ENCODE measurements at regions of chr1 and their contacts with region 1.

Region 1: GRCh38 chr1:12761781-12762180 is 11.8 kb upstream of the PRAMEF12 start:
- DNase-seq: peak in 1 of 2 donors; percentile 72
- H3K4me3 ChIP-seq: no peak overlapping the region
- H3K27ac ChIP-seq: no peak overlapping the region
- H3K4me1 ChIP-seq: no peaks in the 10 kb centered on the region
- H3K27me3 ChIP-seq: no peaks in the 10 kb centered on the region
- CTCF ChIP-seq: no peak
- POLR2A ChIP-seq: no peak

Region 2: DNA sequence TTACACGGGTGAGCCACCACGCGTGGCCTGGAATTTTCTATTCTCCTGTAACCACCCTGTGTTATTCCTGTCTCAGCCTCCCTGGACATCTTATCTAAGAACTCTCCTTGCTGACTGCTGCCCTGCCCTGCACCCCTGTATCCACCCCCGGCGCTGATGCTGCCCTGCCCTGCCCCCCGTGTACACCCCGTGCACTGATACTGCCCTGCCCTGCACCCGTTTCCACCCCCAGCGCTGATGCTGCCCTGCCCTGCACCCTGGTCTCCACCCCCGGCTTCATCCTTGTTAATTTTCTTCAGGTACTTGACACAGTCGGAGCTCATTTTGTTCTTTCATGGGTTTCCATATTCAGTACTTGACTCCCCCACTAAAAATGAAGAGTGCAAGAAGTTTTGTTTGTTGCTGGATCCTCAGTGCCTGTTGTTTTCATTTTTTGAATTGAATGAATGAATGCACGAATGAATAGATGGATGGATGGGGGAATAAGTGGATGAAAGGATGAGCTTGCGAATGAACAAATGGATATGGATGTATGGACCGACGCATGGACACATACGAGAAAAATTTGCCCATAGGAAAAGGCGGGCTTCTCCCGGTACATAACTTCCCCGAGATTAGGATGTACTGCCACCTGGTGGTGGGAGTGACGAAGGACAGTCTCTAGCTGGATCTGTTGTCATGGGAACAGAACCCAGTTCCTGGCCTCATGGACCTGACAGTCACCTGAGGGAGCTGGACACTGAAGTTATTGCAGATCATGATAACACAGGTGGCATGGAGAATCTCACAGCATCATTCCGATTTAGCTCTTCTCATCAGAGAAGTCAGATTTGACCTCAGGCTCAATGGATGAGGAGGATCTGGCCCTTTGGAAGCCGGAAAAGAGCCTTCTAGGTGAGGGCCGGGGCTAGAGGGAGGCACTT is 103.0 kb before region 1 on chr1:
- intact Hi-C with region 1: no loop called
- DNase-seq: no peak
- H3K4me3 ChIP-seq: no peak overlapping the region
- H3K27ac ChIP-seq: no peak overlapping the region
- H3K4me1 ChIP-seq: no peaks in the 10 kb centered on the region
- H3K27me3 ChIP-seq: no peaks in the 10 kb centered on the region
- CTCF ChIP-seq: peak; percentile 88 to 96 (median 91)
- POLR2A ChIP-seq: no peak

Region 3: DNA sequence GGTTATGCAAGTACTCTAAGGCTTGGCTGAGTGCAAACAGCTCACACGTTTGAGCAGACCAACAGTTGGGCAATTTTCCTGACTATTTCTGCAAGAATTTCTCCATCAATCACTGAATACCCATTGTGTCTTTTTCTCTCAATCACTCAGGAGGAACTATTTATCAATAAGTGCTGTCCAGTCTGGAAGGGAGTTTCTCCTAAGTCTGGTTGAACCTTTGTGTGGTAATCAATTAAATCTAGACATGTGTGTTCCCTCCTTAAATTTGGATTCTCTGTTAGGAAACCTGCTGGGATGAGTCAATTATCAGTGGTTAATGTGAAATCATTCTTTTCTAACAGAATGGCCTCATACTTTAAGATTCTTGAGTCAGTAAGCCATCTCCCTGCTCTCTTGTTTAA is 52.7 kb before region 1 on chr1:
- intact Hi-C with region 1: no loop called
- DNase-seq: no peak
- H3K4me3 ChIP-seq: no peak overlapping the region
- H3K27ac ChIP-seq: no peak overlapping the region
- H3K4me1 ChIP-seq: no peaks in the 10 kb centered on the region
- H3K27me3 ChIP-seq: no peaks in the 10 kb centered on the region
- CTCF ChIP-seq: no peak
- POLR2A ChIP-seq: no peak

Region 4: DNA sequence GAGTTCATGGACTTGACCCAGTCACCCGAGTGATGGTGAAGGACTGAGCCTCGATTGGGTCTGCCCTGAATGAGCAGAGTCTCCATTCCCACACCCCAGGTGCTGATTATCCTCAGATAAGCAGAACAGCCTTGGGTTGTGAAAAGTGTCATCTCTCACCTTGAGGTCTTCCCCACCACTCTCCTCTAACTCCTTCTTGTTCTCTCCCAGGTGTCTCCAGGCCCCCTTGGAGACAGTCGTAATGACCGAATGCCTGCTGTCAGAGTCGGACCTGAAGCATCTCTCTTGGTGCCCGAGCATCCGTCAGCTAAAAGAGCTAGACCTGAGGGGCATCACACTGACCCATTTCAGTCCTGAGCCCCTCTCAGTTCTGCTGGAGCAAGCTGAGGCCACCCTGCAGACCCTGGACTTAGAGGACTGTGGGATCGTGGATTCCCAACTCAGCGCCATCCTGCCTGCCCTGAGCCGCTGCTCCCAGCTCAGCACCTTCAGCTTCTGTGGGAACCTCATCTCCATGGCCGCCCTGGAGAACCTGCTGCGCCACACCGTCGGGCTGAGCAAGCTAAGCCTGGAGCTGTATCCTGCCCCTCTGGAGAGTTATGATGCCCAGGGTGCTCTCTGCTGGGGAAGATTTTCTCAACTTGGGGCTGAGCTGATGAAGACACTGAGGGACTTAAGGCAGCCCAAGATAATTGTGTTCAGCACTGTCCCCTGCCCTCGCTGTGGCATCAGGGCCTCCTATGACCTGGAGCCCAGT is 15.2 kb after region 1 on chr1:
- intact Hi-C with region 1: loop called (anchors 1 kb)
- DNase-seq: peak in 1 of 2 donors; percentile 74
- H3K4me3 ChIP-seq: no peak overlapping the region
- H3K27ac ChIP-seq: no peak overlapping the region
- H3K4me1 ChIP-seq: no peaks in the 10 kb centered on the region
- H3K27me3 ChIP-seq: no peaks in the 10 kb centered on the region
- CTCF ChIP-seq: no peak
- POLR2A ChIP-seq: no peak